ENCODE measurements at regions of chr16 and their contacts with region 1.

Region 1: GRCh38 chr16:58589326-58589905 is 40.2 kb downstream of the CNOT1 start:
- DNase-seq: peak; percentile 11
- ATAC-seq: peak; percentile 35; the same call in 1 of the 2 replicates
- H3K4me3 ChIP-seq: no peak overlapping the region
- H3K27ac ChIP-seq: peak overlapping the region; percentile 80; the same call in 1 of the 2 replicates
- H3K4me1 ChIP-seq: peaks cover 3% of the 10 kb centered on the region; the same call in 1 of the 2 replicates
- H3K27me3 ChIP-seq: no peaks in the 10 kb centered on the region
- CTCF ChIP-seq: no peak
- POLR2A ChIP-seq: no peak
- RAD21 ChIP-seq: no peak

Region 2: GRCh38 chr16:58629572-58630104 is 40.2 kb after region 1 on chr16 and contains the start of gene CNOT1:
- CTCF ChIA-PET with region 1: no interaction called
- POLR2A ChIA-PET with region 1: no interaction called
- dilution Hi-C with region 1: no loop called
- in situ Hi-C with region 1: no loop called
- intact Hi-C with region 1: loop called (anchors 5 kb)
- DNase-seq: peak; percentile 100
- ATAC-seq: peak; percentile 92
- H3K4me3 ChIP-seq: peak within 1 kb of the TSS; percentile 82
- H3K27ac ChIP-seq: peak within 1 kb of the TSS; percentile 90
- H3K4me1 ChIP-seq: no peaks in the 10 kb centered on the region
- H3K27me3 ChIP-seq: no peaks in the 10 kb centered on the region
- CTCF ChIP-seq: no peak
- POLR2A ChIP-seq: peak; percentile 93
- RAD21 ChIP-seq: no peak
- total RNA-seq, gene CNOT1: 203 and 357 TPM in 2 replicates